PC-9 (cell line): ENCODE measurements at regions of chr17 and their contacts with region 1.

Region 1: GRCh38 chr17:7687908-7688807 is at the start of gene WRAP53:
- DNase-seq: peak; percentile 93 to 99
- H3K4me3 ChIP-seq: peak within 1 kb of the TSS; percentile 99
- H3K27ac ChIP-seq: peak within 1 kb of the TSS; percentile 96
- H3K4me1 ChIP-seq: peaks cover 10% of the 10 kb centered on the region
- H3K27me3 ChIP-seq: no peaks in the 10 kb centered on the region
- CTCF ChIP-seq: peak; percentile 90
- total RNA-seq, gene WRAP53: 31.9 and 37.2 TPM in 2 replicates

Region 2: GRCh38 chr17:7045909-7046724 is 642.0 kb before region 1 on chr17:
- CTCF ChIA-PET with region 1: no interaction called
- POLR2A ChIA-PET with region 1: no interaction called
- intact Hi-C with region 1: loop called (anchors 5 kb)
- DNase-seq: peak; percentile 96
- H3K4me3 ChIP-seq: peak overlapping the region; percentile 55
- H3K27ac ChIP-seq: peak overlapping the region; percentile 97
- H3K4me1 ChIP-seq: peaks cover 48% of the 10 kb centered on the region
- H3K27me3 ChIP-seq: no peaks in the 10 kb centered on the region
- CTCF ChIP-seq: peak; percentile 95

Region 3: GRCh38 chr17:7351665-7352501 is 336.3 kb before region 1 on chr17 and contains the start of gene KCTD11:
- CTCF ChIA-PET with region 1: no interaction called
- POLR2A ChIA-PET with region 1: no interaction called
- intact Hi-C with region 1: loop called (anchors 2 kb)
- DNase-seq: peak; percentile 92 to 99
- H3K4me3 ChIP-seq: peak within 1 kb of the TSS; percentile 86
- H3K27ac ChIP-seq: peak within 1 kb of the TSS; percentile 98
- H3K4me1 ChIP-seq: peaks cover 28% of the 10 kb centered on the region
- H3K27me3 ChIP-seq: no peaks in the 10 kb centered on the region
- CTCF ChIP-seq: no peak; the same call in 1 of the 2 replicates
- total RNA-seq, gene KCTD11: 16.4 and 18.3 TPM in 2 replicates

Region 4: DNA sequence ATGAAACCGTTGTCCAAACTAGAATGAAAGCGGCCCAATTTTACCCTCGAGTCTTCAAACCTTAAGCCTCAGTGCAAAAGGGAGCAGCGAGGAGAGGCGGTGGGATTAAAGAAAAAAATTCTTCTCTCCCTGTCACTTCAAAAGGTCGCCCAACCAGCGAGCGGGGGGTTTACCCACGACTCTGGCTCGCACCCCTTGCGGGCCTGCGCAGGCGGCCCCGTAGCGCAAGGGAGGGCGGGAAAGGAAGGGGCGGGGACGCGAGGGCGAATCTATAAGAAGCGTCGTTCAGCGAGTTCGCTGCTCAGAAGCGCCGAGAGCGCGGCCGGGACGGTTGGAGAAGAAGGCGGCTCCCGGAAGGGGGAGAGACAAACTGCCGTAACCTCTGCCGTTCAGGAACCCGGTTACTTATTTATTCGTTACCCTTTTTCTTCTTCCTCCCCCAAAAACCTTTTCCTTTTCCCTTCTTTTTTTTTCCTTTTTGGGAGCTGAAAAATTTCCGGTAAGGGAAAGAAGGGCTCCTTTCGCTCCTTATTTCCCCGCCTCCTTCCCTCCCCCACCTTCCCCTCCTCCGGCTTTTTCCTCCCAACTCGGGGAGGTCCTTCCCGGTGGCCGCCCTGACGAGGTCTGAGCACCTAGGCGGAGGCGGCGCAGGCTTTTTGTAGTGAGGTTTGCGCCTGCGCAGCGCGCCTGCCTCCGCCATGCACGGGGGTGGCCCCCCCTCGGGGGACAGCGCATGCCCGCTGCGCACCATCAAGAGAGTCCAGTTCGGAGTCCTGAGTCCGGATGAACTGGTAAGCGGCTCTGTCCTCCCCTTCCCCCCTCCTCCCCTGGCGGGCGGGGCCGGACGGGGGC is 203.9 kb before region 1 on chr17 and contains the start of gene POLR2A:
- CTCF ChIA-PET with region 1: no interaction called
- POLR2A ChIA-PET with region 1: interaction called, 6 read pairs
- intact Hi-C with region 1: loop called (anchors 1 kb)
- DNase-seq: peak; percentile 79 to 99
- H3K4me3 ChIP-seq: peak within 1 kb of the TSS; percentile 88
- H3K27ac ChIP-seq: peak within 1 kb of the TSS; percentile 95
- H3K4me1 ChIP-seq: peaks cover 18% of the 10 kb centered on the region
- H3K27me3 ChIP-seq: no peaks in the 10 kb centered on the region
- CTCF ChIP-seq: no peak
- total RNA-seq, gene POLR2A: 149 and 166 TPM in 2 replicates

Region 5: DNA sequence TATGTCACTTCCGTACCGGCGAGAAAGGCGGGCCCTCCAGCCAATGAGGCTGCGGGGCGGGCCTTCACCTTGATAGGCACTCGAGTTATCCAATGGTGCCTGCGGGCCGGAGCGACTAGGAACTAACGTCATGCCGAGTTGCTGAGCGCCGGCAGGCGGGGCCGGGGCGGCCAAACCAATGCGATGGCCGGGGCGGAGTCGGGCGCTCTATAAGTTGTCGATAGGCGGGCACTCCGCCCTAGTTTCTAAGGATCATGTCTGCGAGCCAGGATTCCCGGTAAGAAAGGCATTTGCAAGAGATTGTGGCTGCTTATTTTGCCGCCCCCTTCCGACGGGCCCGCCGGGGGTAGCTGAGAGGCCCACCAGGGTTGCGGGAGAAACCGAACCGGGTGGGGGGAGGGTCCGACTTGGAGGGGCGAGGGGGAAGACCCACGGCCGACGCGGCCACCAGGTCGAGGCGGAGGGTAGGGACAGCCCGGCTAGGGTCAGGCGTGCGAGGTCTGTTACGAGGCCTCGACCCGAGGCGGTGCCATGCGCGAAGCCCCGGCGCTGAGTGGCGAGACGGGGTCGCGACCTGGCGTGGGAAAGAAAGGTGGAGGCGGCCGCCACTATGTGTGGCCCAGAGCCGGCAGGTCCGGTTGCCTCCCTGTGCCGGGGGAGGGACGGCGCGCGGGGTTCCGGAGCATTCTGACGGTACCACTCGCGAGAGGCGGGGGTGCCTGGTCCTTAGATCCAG is 115.4 kb before region 1 on chr17:
- CTCF ChIA-PET with region 1: no interaction called
- POLR2A ChIA-PET with region 1: no interaction called
- intact Hi-C with region 1: loop called (anchors 1 kb)
- DNase-seq: peak; percentile 96 to 100
- H3K4me3 ChIP-seq: peak overlapping the region; percentile 91
- H3K27ac ChIP-seq: peak overlapping the region; percentile 90
- H3K4me1 ChIP-seq: peaks cover 33% of the 10 kb centered on the region
- H3K27me3 ChIP-seq: no peaks in the 10 kb centered on the region
- CTCF ChIP-seq: no peak

Region 6: GRCh38 chr17:7626956-7627249 is 61.3 kb before region 1 on chr17:
- CTCF ChIA-PET with region 1: interaction called, 8 read pairs
- POLR2A ChIA-PET with region 1: interaction called, 10 read pairs
- intact Hi-C with region 1: loop called (anchors 5 kb)
- DNase-seq: peak in 1 of 2 experiments; percentile 15
- H3K4me3 ChIP-seq: peak overlapping the region; percentile 79
- H3K27ac ChIP-seq: no peak overlapping the region
- H3K4me1 ChIP-seq: peaks cover 4% of the 10 kb centered on the region; the same call in 1 of the 2 replicates
- H3K27me3 ChIP-seq: no peaks in the 10 kb centered on the region
- CTCF ChIP-seq: no peak

Region 7: DNA sequence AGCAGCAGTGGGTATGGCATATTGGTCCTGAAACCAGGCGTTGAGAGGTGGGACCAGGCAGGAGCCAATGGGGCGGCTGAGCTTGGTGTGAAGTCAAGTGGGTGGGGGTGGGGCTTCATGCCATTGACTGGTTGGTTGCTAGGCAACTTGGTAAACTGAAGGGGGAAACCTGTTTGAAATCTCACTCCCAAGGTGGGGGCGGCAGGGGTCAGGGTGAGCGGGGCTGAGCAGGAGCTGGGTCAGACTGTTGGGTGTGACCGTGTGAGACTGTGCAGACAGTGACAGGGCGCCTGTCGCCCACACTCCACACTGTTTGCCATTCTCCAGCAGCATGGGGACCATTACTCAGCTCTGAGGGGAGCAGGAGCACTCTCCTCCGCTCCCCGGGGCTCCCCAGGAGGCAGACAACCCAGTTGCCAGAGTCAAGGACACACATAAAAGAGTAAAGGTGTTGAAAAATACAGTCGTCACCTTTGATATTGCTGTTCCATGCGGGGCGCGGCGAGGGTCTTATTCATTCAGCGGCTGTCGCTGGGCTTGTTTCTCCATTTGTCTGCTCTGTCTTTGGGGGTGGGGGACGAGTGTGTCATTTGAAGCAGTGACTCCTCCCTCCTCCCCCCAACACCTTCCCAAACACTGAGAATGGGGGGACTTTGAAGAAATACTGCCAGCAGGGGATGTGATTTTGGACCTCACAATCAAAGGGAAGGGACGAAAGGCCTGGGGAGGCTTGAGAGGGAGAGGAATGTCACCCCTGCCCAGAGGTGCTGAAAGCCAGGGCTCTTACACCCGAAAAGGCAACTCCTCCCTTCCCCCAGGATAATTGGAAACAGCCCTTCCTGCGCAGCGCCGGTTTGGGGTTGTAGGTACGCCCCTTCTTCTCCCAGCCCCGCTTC is 15.7 kb after region 1 on chr17:
- CTCF ChIA-PET with region 1: no interaction called
- POLR2A ChIA-PET with region 1: no interaction called
- intact Hi-C with region 1: no loop called
- DNase-seq: no peak
- H3K4me3 ChIP-seq: no peak overlapping the region
- H3K27ac ChIP-seq: no peak overlapping the region
- H3K4me1 ChIP-seq: no peaks in the 10 kb centered on the region
- H3K27me3 ChIP-seq: no peaks in the 10 kb centered on the region
- CTCF ChIP-seq: no peak